ENCODE measurements at regions of chr7 and their contacts with region 1.

Region 1: GRCh38 chr7:65037740-65038678 is 31.5 kb upstream of the ERV3-1 start:
- DNase-seq: peak; percentile 89
- ATAC-seq: peak; percentile 90
- H3K4me3 Mint-ChIP-seq: peak overlapping the region; percentile 82
- H3K27ac Mint-ChIP-seq: peak overlapping the region; percentile 82
- H3K4me1 Mint-ChIP-seq: peaks cover 13% of the 10 kb centered on the region
- H3K27me3 Mint-ChIP-seq: no peaks in the 10 kb centered on the region

Region 2: GRCh38 chr7:64902806-64903721 is 134.9 kb before region 1 on chr7 and contains the start of gene ZNF273:
- POLR2A ChIA-PET with region 1: interaction called, 10 read pairs
- DNase-seq: peak; percentile 83
- ATAC-seq: peak; percentile 99
- H3K4me3 Mint-ChIP-seq: peak within 1 kb of the TSS; percentile 97
- H3K27ac Mint-ChIP-seq: peak within 1 kb of the TSS; percentile 97
- H3K4me1 Mint-ChIP-seq: peaks cover 27% of the 10 kb centered on the region
- H3K27me3 Mint-ChIP-seq: no peaks in the 10 kb centered on the region
- total RNA-seq, gene ZNF273: 10.9 to 12.6 TPM

Region 3: GRCh38 chr7:64999165-65000004 is 38.6 kb before region 1 on chr7:
- POLR2A ChIA-PET with region 1: no interaction called
- DNase-seq: no peak
- ATAC-seq: no peak
- H3K4me3 Mint-ChIP-seq: no peak overlapping the region
- H3K27ac Mint-ChIP-seq: no peak overlapping the region
- H3K4me1 Mint-ChIP-seq: peaks cover 3% of the 10 kb centered on the region
- H3K27me3 Mint-ChIP-seq: no peaks in the 10 kb centered on the region